CD4-positive, alpha-beta memory T cell (primary cell): ENCODE measurements at regions of chr7 and their contacts with region 1.

Region 1: GRCh38 chr7:149195180-149196150 is at the start of gene ZNF282:
- DNase-seq: peak; percentile 54 to 66 (median 61)
- H3K4me3 ChIP-seq: peak within 1 kb of the TSS; percentile 70 to 76
- H3K4me3 Mint-ChIP-seq: peak within 1 kb of the TSS; percentile 88 to 97 (median 91)
- H3K27ac ChIP-seq: peak within 1 kb of the TSS; percentile 68
- H3K27ac Mint-ChIP-seq: peak within 1 kb of the TSS; percentile 81 to 95 (median 89)
- H3K4me1 ChIP-seq: peaks cover 23% of the 10 kb centered on the region
- H3K4me1 Mint-ChIP-seq: peaks cover 18 to 48% (median 32%) of the 10 kb centered on the region in 4 donors
- H3K27me3 ChIP-seq: no peaks in the 10 kb centered on the region
- H3K27me3 Mint-ChIP-seq: no peaks in the 10 kb centered on the region
- total RNA-seq, gene ZNF282: 19.1 to 20.7 TPM

Region 2: GRCh38 chr7:149010451-149011010 is 184.9 kb before region 1 on chr7:
- CTCF ChIA-PET with region 1: no interaction called
- POLR2A ChIA-PET with region 1: no interaction called
- intact Hi-C with region 1: no loop called
- DNase-seq: no peak
- H3K4me3 ChIP-seq: no peak overlapping the region
- H3K4me3 Mint-ChIP-seq: no peak overlapping the region
- H3K27ac ChIP-seq: no peak overlapping the region
- H3K27ac Mint-ChIP-seq: peak overlapping the region in 1 of 7 donors; percentile 44
- H3K4me1 ChIP-seq: peaks cover 4% of the 10 kb centered on the region
- H3K4me1 Mint-ChIP-seq: peaks cover 4 to 10% (median 7%) of the 10 kb centered on the region in 4 donors
- H3K27me3 ChIP-seq: no peaks in the 10 kb centered on the region
- H3K27me3 Mint-ChIP-seq: no peaks in the 10 kb centered on the region

Region 3: DNA sequence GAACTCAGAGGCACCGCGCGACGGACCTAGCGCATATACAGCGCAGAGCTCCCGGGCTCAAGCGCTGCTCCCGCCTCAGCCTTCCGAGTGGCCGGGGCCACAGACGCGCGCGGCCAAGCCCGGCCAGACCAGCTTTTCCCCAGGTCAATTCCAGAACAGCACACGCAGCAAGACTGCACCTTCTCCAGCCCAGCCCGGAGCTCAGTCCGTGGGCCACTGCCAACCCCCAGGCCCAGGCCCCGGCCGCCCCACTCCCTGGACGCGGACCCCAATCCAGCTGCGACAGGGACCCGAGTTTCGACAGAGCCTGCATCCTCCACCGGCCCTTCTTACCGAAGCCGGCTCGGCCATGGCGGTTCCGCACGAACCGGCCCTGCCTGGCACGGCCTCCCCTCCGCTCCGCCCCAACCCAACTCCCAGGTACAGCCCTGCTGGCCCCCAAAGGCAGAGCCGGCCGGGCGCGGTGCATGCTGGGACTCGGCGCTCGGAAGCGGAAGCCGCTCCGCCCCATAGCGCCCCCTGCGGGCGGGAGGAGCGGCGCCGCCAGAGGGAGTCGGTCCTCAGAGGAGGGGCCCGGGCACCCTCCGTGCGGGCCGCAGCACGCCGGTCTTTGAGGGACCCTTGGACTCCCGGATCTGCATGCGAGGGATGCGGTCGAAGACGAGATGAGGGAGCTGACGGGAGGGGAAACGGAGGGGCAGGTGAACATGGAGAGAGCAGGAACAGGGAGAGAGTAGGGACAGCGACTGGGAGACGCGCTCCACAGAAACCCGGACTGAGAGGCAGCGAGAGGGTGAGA is 69.4 kb before region 1 on chr7 and contains the start of gene ZNF425:
- CTCF ChIA-PET with region 1: interaction called, 3 read pairs
- POLR2A ChIA-PET with region 1: interaction called, 6 read pairs
- intact Hi-C with region 1: loop called (anchors 1 kb)
- DNase-seq: peak; percentile 89 to 94 (median 91)
- H3K4me3 ChIP-seq: peak within 1 kb of the TSS; percentile 83 to 96
- H3K4me3 Mint-ChIP-seq: peak within 1 kb of the TSS; percentile 91 to 100 (median 100)
- H3K27ac ChIP-seq: peak within 1 kb of the TSS; percentile 88
- H3K27ac Mint-ChIP-seq: peak within 1 kb of the TSS; percentile 91 to 99 (median 98)
- H3K4me1 ChIP-seq: peaks cover 19% of the 10 kb centered on the region
- H3K4me1 Mint-ChIP-seq: peaks cover 15 to 35% (median 25%) of the 10 kb centered on the region in 4 donors
- H3K27me3 ChIP-seq: no peaks in the 10 kb centered on the region
- H3K27me3 Mint-ChIP-seq: no peaks in the 10 kb centered on the region
- total RNA-seq, gene ZNF425: 3.2 to 4.0 TPM

Region 4: DNA sequence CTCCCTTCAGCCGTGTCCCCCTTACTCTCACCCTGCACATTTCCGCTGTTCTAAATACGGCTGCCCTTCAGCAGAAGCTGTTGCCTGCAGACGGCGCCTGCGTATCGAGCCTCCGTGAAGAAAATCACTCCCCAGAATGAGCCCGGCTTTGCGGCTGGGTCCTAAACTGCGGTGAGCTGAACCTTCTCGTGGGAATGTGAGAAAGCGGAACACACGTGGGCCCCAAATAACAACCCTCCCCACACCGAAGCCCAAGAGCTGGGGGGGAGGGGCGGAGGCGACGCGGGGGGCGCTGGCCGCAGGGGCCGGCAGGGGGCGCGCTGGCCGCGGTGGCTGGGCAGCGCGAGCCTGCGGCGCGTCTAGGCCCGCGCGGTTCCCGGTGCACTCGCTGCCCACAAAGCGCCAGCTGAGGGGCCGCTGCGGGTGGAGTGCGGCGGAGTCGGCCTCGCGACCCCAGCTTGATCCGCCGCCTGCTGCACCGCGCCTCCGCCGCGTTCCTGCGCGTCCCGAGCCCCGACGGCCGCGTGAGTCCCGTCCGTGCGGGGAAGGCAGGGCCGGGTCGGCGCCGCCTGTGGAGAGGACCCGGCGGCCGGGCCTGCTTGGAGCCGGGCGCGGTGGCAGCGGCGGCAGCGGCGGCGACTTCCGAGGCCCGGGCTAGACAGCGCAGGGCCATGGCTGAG is 48.3 kb before region 1 on chr7 and contains the start of gene ZNF398:
- CTCF ChIA-PET with region 1: interaction called, 8 read pairs
- POLR2A ChIA-PET with region 1: interaction called, 28 read pairs
- intact Hi-C with region 1: loop called (anchors 5 kb)
- DNase-seq: peak; percentile 83 to 89 (median 85)
- H3K4me3 ChIP-seq: peak within 1 kb of the TSS; percentile 71 to 74
- H3K4me3 Mint-ChIP-seq: peak within 1 kb of the TSS; percentile 85 to 95 (median 92)
- H3K27ac ChIP-seq: peak within 1 kb of the TSS; percentile 86
- H3K27ac Mint-ChIP-seq: peak within 1 kb of the TSS; percentile 87 to 97 (median 96)
- H3K4me1 ChIP-seq: peaks cover 35% of the 10 kb centered on the region
- H3K4me1 Mint-ChIP-seq: peaks cover 18 to 46% (median 32%) of the 10 kb centered on the region in 4 donors
- H3K27me3 ChIP-seq: no peaks in the 10 kb centered on the region
- H3K27me3 Mint-ChIP-seq: no peaks in the 10 kb centered on the region
- total RNA-seq, gene ZNF398: 26.9 to 28.4 TPM

Region 5: DNA sequence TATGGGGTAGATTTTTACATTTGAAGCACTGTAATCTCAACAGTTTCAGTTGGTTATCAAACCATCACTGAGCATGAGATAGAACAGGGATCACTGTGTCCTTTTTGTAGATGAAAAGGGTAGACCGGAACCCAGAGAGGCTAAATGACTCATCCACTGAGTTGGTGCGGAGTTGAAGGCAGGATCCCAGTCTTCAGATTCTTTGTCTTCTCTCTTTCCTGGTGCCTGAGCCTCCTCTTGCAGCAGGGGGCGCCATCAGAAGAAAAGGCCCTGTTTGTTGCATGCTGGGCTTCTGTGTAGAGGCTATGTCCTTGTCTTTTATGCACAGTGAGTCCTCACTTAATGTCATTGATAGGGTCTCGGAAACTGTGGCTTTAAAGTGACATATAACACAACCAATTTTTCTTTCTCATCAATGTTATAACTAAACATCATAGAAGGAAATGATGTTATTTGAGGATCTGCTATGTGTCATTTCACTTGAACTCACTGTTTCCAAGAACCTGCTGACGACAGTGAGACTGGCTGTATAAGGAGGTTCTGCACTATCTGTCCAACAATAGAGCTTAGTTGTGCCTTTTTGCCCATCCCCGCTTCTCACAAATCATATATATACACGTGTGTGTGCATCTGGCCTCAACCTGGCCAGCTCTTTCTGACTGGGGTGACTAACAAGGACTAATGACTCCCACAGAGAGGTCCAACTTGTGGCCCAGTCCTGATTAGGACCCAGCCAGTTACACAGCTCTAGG is 14.2 kb after region 1 on chr7:
- CTCF ChIA-PET with region 1: interaction called, 5 read pairs
- POLR2A ChIA-PET with region 1: interaction called, 5 read pairs
- intact Hi-C with region 1: loop called (anchors 2 kb)
- DNase-seq: peak; percentile 45 to 78 (median 52)
- H3K4me3 ChIP-seq: no peak overlapping the region
- H3K4me3 Mint-ChIP-seq: peak overlapping the region in 3 of 8 donors; percentile 21 to 58 (median 22)
- H3K27ac ChIP-seq: no peak overlapping the region
- H3K27ac Mint-ChIP-seq: peak overlapping the region; percentile 34 to 86 (median 66)
- H3K4me1 ChIP-seq: peaks cover 7% of the 10 kb centered on the region
- H3K4me1 Mint-ChIP-seq: peaks cover 5 to 15% (median 11%) of the 10 kb centered on the region in 4 donors
- H3K27me3 ChIP-seq: no peaks in the 10 kb centered on the region
- H3K27me3 Mint-ChIP-seq: no peaks in the 10 kb centered on the region

Region 6: GRCh38 chr7:149284850-149285626 is 89.6 kb after region 1 on chr7:
- CTCF ChIA-PET with region 1: interaction called, 11 read pairs
- POLR2A ChIA-PET with region 1: interaction called, 13 read pairs
- intact Hi-C with region 1: no loop called
- DNase-seq: peak; percentile 96 to 98 (median 98)
- H3K4me3 ChIP-seq: peak overlapping the region; percentile 49 to 72
- H3K4me3 Mint-ChIP-seq: peak overlapping the region; percentile 80 to 96 (median 90)
- H3K27ac ChIP-seq: peak overlapping the region; percentile 57
- H3K27ac Mint-ChIP-seq: peak overlapping the region; percentile 87 to 93 (median 91)
- H3K4me1 ChIP-seq: peaks cover 38% of the 10 kb centered on the region
- H3K4me1 Mint-ChIP-seq: peaks cover 26 to 53% (median 40%) of the 10 kb centered on the region in 4 donors
- H3K27me3 ChIP-seq: no peaks in the 10 kb centered on the region
- H3K27me3 Mint-ChIP-seq: no peaks in the 10 kb centered on the region